ENCODE measurements at regions of chr19 and their contacts with region 1.

Region 1: GRCh38 chr19:7868676-7869452 is 5.3 kb downstream of the PRR36 start:
- DNase-seq: peak; percentile 13
- ATAC-seq: peak; percentile 85
- H3K4me3 ChIP-seq: peak overlapping the region; percentile 48; the same call in 1 of the 2 replicates
- H3K27ac ChIP-seq: no peak overlapping the region
- H3K4me1 ChIP-seq: peaks cover 12% of the 10 kb centered on the region; the same call in 1 of the 2 replicates
- H3K27me3 ChIP-seq: peaks cover 5 to 7% of the 10 kb centered on the region in 2 experiments; a peak in 3 of 4 replicates
- CTCF ChIP-seq: peak; percentile 60 to 73 (median 71); a peak in 5 of 6 replicates
- EP300 ChIP-seq: no peak
- POLR2A ChIP-seq: peak; percentile 51; the same call in 1 of the 2 replicates
- RAD21 ChIP-seq: no peak

Region 2: DNA sequence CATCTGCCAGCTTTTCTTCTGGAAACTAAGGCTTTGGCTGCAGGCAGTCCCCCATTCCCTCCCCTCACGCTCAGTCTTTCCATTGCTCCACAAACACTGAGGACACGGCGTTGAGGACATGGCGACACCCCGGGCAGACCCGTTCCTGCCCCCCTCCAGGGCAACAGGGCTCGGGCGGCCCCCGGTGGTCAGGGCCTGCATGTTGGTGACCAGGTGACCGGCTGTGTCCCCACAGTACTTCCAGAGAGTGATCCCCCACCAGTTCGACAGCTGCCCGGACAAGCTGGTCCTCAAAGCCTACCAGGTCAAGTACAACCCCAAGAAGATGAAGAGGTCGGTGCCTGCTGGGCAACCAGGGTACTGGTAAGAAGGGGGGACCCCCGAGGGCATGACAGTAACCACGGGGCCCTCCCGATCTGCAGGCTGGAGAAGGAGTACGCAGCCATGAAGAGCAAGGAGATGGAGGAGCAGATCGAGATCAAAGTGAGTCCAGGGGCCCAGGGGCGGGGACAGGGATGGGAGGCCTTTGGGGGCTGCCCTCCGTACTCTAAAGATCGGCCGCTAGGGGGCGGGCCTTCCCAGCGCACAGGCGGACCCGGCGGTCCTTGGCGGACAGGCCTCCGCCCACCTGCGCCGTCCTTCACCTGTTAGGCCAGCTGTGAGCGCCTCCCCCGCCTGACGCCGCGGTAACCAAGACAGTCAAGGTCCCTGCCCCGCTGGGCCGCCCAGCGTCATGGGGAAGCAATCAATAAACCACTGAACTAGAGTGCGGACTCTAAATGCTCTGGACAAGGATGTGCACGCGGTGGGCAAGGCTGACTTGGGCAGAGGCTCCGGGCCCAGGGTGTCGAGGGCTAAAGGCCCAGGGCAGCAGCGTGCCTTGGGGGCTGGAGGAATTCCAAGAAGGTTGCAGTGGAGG is 15.8 kb before region 1 on chr19:
- CTCF ChIA-PET with region 1: interaction called, 12 read pairs
- POLR2A ChIA-PET with region 1: no interaction called
- RAD21 ChIA-PET with region 1: no interaction called
- SMC1A ChIA-PET with region 1: no interaction called
- in situ Hi-C with region 1: no loop called
- intact Hi-C with region 1: no loop called
- DNase-seq: no peak
- ATAC-seq: peak; percentile 99
- H3K4me3 ChIP-seq: no peak overlapping the region
- H3K27ac ChIP-seq: no peak overlapping the region
- H3K4me1 ChIP-seq: no peaks in the 10 kb centered on the region; the same call in 1 of the 2 replicates
- H3K27me3 ChIP-seq: no peaks in the 10 kb centered on the region
- CTCF ChIP-seq: peak; percentile 70 to 83 (median 72)
- EP300 ChIP-seq: no peak
- POLR2A ChIP-seq: no peak
- RAD21 ChIP-seq: peak; percentile 67

Region 3: GRCh38 chr19:7903244-7904073 is 34.6 kb after region 1 on chr19 and contains the start of gene MAP2K7:
- CTCF ChIA-PET with region 1: interaction called, 6 read pairs
- POLR2A ChIA-PET with region 1: no interaction called
- RAD21 ChIA-PET with region 1: interaction called, 7 read pairs
- SMC1A ChIA-PET with region 1: no interaction called
- in situ Hi-C with region 1: no loop called
- intact Hi-C with region 1: loop called (anchors 2 kb)
- DNase-seq: peak; percentile 99
- ATAC-seq: peak; percentile 89
- H3K4me3 ChIP-seq: peak within 1 kb of the TSS; percentile 95
- H3K27ac ChIP-seq: peak within 1 kb of the TSS; percentile 81
- H3K4me1 ChIP-seq: peaks cover 14% of the 10 kb centered on the region
- H3K27me3 ChIP-seq: no peaks in the 10 kb centered on the region
- CTCF ChIP-seq: peak; percentile 65 to 99 (median 90); a peak in 5 of 6 replicates
- EP300 ChIP-seq: no peak; a peak in 1 of 4 replicates
- POLR2A ChIP-seq: peak; percentile 92
- RAD21 ChIP-seq: peak; percentile 36; the same call in 1 of the 2 replicates
- polyA plus RNA-seq, gene MAP2K7: 0.34 to 0.95 TPM

Region 4: DNA sequence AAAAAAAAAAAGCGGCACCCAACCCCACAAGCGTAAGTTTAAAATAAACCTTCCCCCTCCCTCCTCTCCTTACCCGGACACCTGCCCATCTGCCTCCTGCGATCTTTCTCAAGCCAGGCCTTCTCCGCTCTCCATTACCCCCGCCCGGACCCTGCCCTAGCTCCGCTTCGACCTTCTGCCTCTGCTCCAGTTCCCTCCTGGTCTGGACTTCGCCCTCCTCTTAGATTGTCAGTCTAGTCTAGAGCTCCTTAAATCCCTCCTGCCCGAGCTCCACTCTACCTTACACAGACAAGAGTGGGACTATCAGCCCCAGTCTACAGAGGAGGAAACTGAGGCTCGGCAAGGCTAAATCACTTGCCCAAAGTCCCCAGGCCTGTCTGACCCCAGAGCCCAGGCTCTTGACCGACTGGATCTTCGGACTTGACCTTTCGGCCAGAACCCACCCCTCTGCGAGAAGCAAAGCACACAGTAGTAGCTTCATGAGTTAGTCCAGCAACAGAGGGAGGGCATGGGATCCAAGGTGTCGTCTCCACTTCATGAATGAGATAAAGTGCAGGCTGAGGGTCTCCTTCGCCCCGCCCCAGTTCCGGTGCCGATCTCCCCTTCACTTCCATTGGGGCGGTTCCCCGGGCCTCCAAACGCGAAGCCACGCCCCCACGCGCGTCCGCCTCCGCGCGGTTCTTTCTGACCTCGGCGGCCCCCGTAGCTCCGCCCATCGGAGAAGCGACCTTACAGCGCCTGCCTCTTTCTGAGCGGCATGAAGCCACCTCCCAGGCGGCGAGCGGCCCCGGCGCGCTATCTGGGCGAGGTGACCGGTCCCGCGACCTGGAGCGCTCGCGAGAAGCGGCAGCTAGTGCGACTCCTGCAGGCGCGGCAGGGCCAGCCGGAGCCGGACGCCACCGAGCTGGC is 51.0 kb after region 1 on chr19 and contains the start of gene SNAPC2:
- CTCF ChIA-PET with region 1: interaction called, 19 read pairs
- POLR2A ChIA-PET with region 1: interaction called, 4 read pairs
- RAD21 ChIA-PET with region 1: interaction called, 8 read pairs
- SMC1A ChIA-PET with region 1: no interaction called
- in situ Hi-C with region 1: no loop called
- intact Hi-C with region 1: no loop called
- DNase-seq: peak; percentile 70
- ATAC-seq: peak; percentile 86
- H3K4me3 ChIP-seq: peak within 1 kb of the TSS; percentile 82
- H3K27ac ChIP-seq: peak within 1 kb of the TSS; percentile 44
- H3K4me1 ChIP-seq: peaks cover 11% of the 10 kb centered on the region
- H3K27me3 ChIP-seq: peaks cover 8 to 21% of the 10 kb centered on the region in 2 experiments
- CTCF ChIP-seq: no peak
- EP300 ChIP-seq: no peak
- POLR2A ChIP-seq: peak; percentile 61; the same call in 1 of the 2 replicates
- RAD21 ChIP-seq: no peak
- polyA plus RNA-seq, gene SNAPC2: 0.19 to 1.0 TPM

Region 5: GRCh38 chr19:7930765-7931164 is 61.9 kb after region 1 on chr19:
- CTCF ChIA-PET with region 1: no interaction called
- POLR2A ChIA-PET with region 1: interaction called, 13 read pairs
- RAD21 ChIA-PET with region 1: no interaction called
- SMC1A ChIA-PET with region 1: no interaction called
- in situ Hi-C with region 1: no loop called
- intact Hi-C with region 1: no loop called
- DNase-seq: no peak
- ATAC-seq: no peak
- H3K4me3 ChIP-seq: no peak overlapping the region
- H3K27ac ChIP-seq: no peak overlapping the region
- H3K4me1 ChIP-seq: no peaks in the 10 kb centered on the region; the same call in 1 of the 2 replicates
- H3K27me3 ChIP-seq: no peaks in the 10 kb centered on the region
- CTCF ChIP-seq: no peak
- EP300 ChIP-seq: no peak
- POLR2A ChIP-seq: no peak
- RAD21 ChIP-seq: no peak

Measured in GM12878 (cell line).